ENCODE measurements at regions of chrX and their contacts with region 1.

Region 1: DNA sequence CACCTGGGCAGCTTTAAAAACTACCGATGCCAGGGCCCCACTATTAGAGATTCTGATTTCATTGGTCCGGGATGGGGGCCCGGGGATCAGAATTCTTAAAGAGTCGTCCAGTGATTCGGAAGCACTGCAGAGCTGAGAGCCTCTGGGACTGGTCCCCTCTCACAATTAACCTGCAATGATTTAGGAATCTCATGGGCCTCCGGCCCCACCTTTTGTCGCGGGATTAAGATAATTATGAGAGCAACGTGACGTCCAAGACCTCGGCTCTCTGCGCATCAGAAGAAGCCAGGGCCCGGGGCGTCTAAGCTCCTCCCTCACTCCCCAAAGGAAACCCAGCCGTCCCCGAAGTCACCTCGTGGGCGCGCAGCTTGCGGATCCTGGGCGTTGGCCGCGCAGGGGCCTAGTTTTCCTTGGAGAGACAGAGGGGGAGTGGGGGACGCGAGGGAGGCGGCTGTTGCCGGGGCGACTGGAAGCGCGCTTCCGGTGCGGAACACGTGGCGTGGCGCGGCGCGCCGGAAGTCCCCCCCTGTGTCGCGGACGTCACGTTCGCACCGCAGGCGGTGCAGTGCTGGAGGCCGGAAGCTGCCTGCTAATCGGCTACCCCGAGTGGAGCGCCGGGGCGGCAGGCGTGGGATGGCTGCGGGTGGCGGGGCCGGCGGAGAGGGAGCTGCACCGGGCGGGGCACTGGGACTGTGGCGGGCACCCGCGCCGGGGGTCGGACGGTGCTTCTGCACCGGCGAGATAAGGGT is at the start of gene GEMIN8:
- DNase-seq: peak; percentile 97
- H3K4me3 ChIP-seq: peak within 1 kb of the TSS; percentile 52 to 79 (median 68)
- H3K27ac ChIP-seq: peak within 1 kb of the TSS; percentile 67 to 92 (median 88)
- H3K4me1 ChIP-seq: peaks cover 0 to 43% (median 33%) of the 10 kb centered on the region in 6 donors
- H3K27me3 ChIP-seq: peaks cover 0 to 27% (median 0%) of the 10 kb centered on the region in 7 donors
- CTCF ChIP-seq: no peak
- POLR2A ChIP-seq: peak; percentile 29 to 35 (median 31)
- total RNA-seq, gene GEMIN8: 11.6 to 17.0 (median 14.5) TPM

Region 2: GRCh38 chrX:13507893-13508292 is 521.7 kb before region 1 on chrX:
- intact Hi-C with region 1: loop called (anchors 2 kb)
- DNase-seq: no peak
- H3K4me3 ChIP-seq: no peak overlapping the region
- H3K27ac ChIP-seq: no peak overlapping the region
- H3K4me1 ChIP-seq: peaks cover 0 to 6% (median 1%) of the 10 kb centered on the region in 6 donors
- H3K27me3 ChIP-seq: peaks cover 0 to 19% (median 0%) of the 10 kb centered on the region in 7 donors
- CTCF ChIP-seq: no peak
- POLR2A ChIP-seq: no peak

Region 3: GRCh38 chrX:13653022-13653693 is 376.4 kb before region 1 on chrX and contains the start of gene TCEANC:
- intact Hi-C with region 1: loop called (anchors 10 kb)
- DNase-seq: peak; percentile 99
- H3K4me3 ChIP-seq: peak within 1 kb of the TSS; percentile 49 to 81 (median 52)
- H3K27ac ChIP-seq: peak within 1 kb of the TSS; percentile 82 to 98 (median 96)
- H3K4me1 ChIP-seq: peaks cover 9 to 31% (median 15%) of the 10 kb centered on the region in 6 donors
- H3K27me3 ChIP-seq: no peaks in the 10 kb centered on the region
- CTCF ChIP-seq: peak in 2 of 11 experiments; percentile 9 to 36
- POLR2A ChIP-seq: peak; percentile 57 to 63 (median 59)
- total RNA-seq, gene TCEANC: 7.0 to 11.6 (median 8.8) TPM

Region 4: DNA sequence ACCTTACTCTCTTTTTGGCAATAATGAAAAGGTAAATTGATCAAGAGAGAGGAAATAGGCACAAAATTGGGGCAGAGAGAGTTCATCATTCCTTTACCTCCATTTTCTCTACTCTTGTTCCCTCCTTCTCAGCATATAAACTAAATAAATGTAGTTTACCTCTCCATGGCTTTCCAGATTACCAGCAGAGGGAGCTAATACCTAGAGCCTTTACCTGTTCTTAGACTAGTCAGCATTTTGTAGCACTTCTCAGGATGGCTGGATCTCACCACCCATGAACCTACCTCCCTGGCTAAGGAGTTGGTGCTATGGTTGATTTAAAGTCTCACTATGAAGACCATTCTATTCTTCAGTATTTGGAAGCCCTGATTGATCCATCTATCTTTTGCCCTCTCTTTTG is 279.4 kb before region 1 on chrX:
- intact Hi-C with region 1: loop called (anchors 10 kb)
- DNase-seq: no peak
- H3K4me3 ChIP-seq: no peak overlapping the region
- H3K27ac ChIP-seq: peak overlapping the region in 4 of 8 donors; percentile 25 to 36 (median 32)
- H3K4me1 ChIP-seq: peaks cover 5 to 54% (median 21%) of the 10 kb centered on the region in 6 donors
- H3K27me3 ChIP-seq: no peaks in the 10 kb centered on the region
- CTCF ChIP-seq: peak in 10 of 11 experiments; percentile 34 to 60 (median 48)
- POLR2A ChIP-seq: no peak